ENCODE measurements at regions of chr14 and their contacts with region 1.

Region 1: DNA sequence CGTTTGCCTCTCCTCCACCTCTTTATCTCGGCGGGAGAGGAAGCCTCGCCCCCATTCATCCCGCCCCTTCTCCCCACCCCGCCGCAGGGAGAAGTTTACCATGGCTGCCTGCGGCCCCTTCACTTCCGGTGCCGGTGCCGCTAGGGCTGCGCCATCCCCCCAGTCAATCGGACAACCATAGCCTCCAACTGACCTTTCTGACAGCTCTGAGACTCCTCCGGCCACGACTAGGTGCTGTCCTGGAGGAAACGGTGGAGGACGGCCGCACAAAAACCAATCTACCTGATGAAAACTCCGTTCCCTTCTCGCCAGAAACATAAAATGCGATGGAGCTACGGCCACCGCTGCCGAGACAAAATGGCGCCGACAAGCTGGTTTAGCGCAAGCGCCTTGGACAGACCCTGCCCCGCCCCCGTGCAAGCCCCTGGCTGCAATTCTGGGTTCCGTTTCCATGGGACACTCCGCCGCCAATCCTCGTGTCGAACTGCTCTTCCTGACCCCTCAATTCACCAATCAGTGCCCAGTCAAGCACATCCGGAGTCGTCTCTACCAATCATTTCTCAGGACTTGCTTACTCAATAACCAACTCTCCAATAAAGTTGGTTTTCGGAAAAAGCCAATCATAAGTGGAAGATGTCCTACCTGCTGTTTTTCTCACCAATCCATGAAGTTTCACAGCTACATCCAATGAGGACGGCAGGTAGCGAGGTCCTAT is 436 bp upstream of the ARID4A start:
- DNase-seq: peak; percentile 98
- H3K4me3 Mint-ChIP-seq: no peak overlapping the region
- H3K27ac Mint-ChIP-seq: no peak overlapping the region
- H3K4me1 Mint-ChIP-seq: no peaks in the 10 kb centered on the region
- H3K27me3 Mint-ChIP-seq: no peaks in the 10 kb centered on the region
- CTCF ChIP-seq: no peak

Region 2: DNA sequence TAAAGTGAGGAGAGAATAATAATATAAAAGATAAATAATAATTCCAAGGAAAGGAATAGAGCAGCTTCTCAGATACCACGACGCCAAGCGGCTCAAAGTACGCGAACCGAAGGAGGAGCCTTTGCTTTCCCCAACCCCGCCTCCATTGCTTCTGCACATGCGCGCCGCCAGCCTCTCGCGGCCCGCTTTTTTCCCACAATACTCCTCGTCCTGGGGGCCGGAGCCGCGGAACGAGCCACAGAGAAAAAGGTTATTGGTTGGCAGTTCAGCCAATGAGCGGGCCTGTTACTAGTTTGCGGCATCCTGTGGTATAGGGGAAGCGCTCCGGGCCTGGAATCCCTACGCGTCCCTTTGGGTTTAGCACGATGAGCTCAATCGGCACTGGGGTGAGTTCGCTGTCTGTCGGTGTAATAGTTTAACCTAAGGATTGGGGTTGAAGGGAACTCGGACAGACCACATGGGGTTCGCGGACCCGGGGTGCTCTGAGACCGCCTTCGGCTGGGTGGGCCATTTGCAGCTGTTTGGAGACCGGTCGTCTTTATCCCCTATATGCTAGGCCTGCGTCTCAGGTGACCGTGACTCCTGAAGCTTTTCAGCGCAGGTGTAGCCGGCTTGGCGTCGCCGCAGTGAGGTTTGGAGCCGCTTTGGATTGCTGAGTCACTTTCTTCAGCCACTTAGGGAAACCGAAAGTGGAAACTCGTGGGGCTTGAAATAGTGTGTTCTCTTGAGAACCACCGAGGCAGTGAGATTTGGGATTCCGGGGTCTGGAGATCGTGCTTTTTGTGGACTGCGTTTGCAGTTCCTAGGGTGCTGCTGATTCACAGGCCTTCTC is 53.1 kb before region 1 on chr14 and contains the start of gene PSMA3:
- CTCF ChIA-PET with region 1: no interaction called
- intact Hi-C with region 1: loop called (anchors 5 kb)
- DNase-seq: peak; percentile 97
- H3K4me3 Mint-ChIP-seq: peak within 1 kb of the TSS; percentile 91
- H3K27ac Mint-ChIP-seq: peak within 1 kb of the TSS; percentile 97
- H3K4me1 Mint-ChIP-seq: peaks cover 31% of the 10 kb centered on the region
- H3K27me3 Mint-ChIP-seq: no peaks in the 10 kb centered on the region
- CTCF ChIP-seq: no peak
- total RNA-seq, gene PSMA3: 222 and 260 TPM in 2 replicates

Region 3: GRCh38 chr14:58280954-58281787 is 16.7 kb before region 1 on chr14:
- CTCF ChIA-PET with region 1: interaction called, 10 read pairs
- intact Hi-C with region 1: no loop called
- DNase-seq: peak; percentile 66
- H3K4me3 Mint-ChIP-seq: peak overlapping the region; percentile 55
- H3K27ac Mint-ChIP-seq: peak overlapping the region; percentile 78
- H3K4me1 Mint-ChIP-seq: peaks cover 54% of the 10 kb centered on the region
- H3K27me3 Mint-ChIP-seq: no peaks in the 10 kb centered on the region
- CTCF ChIP-seq: no peak

Region 4: DNA sequence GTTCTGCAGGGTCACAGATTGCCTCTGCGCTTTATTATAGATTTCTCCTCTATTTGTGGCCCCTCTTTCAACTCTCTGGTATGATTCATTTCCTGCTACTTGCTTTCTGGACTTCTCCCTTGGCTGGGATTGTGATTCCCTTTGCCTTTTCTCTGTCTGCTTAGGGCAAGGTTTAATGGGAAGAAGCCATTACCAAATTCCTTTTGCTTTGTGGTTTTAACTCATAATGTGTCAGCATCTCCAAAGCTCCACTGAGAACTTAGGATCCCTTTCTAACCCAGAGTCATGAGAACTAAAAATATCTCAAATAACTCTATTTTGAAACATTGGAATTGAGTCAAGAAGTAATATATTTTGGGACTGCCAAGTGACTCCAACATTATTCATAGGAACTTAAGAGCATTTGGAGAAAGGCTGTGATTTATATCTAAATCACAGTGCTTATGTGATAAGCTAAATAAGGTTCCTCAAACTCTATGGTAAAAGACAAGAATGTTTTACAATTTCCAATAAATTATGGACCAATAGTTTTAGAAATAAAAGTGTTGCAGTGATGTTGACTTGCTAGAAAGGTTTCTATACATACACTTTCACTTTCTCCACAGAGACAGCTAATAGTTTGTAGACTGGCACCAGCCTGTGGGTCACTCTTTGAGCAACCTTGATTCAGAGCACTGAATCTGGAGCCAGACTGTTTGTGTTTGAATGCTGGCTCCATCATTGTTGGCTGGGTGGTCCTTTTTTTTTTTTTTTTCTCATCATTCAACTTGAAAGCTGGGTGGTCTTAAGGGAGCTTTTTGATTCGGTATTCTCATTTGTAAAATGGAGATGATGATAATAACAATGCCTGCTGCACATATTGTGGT is 433.8 kb after region 1 on chr14:
- CTCF ChIA-PET with region 1: no interaction called
- intact Hi-C with region 1: no loop called
- DNase-seq: peak; percentile 9
- H3K4me3 Mint-ChIP-seq: no peak overlapping the region
- H3K27ac Mint-ChIP-seq: peak overlapping the region; percentile 35
- H3K4me1 Mint-ChIP-seq: peaks cover 14% of the 10 kb centered on the region
- H3K27me3 Mint-ChIP-seq: no peaks in the 10 kb centered on the region
- CTCF ChIP-seq: no peak